PC-3 (cell line): ENCODE measurements at regions of chr3 and their contacts with region 1.

Region 1: GRCh38 chr3:22117751-22118346 is 366.8 kb upstream of the ZNF385D start:
- DNase-seq: peak; percentile 72
- ATAC-seq: no peak
- H3K4me3 ChIP-seq: no peak overlapping the region
- H3K27ac ChIP-seq: no peak overlapping the region
- H3K4me1 ChIP-seq: peaks cover 37% of the 10 kb centered on the region
- H3K27me3 ChIP-seq: no peaks in the 10 kb centered on the region
- CTCF ChIP-seq: peak; percentile 88

Region 2: DNA sequence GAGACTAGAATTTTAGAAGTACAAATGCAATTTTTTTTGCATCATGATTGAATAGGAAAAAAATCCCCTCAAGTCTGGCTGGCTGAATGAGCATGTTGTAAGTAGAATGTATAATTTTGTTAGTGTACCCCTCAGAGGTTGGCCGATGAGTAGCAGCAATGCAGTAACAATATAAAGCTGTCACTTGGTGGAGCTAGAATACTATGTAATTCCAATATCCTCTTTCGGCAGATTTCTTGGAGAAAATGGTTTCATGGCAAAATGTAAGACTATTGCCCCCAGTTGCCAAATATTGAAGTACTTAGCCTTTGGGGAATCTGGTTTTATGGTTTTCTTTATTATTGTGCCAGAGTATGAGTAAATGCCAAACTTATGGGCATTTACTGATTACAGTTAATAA is 1892.1 kb before region 1 on chr3:
- CTCF ChIA-PET with region 1: no interaction called
- POLR2A ChIA-PET with region 1: no interaction called
- intact Hi-C with region 1: loop called (anchors 10 kb)
- DNase-seq: peak; percentile 61
- ATAC-seq: peak; percentile 85
- H3K4me3 ChIP-seq: no peak overlapping the region
- H3K27ac ChIP-seq: no peak overlapping the region
- H3K4me1 ChIP-seq: no peaks in the 10 kb centered on the region
- H3K27me3 ChIP-seq: 0 out of 2 replicates have a peak, but pooled peaks cover 4% of the 10 kb centered on the region
- CTCF ChIP-seq: peak; percentile 70

Region 3: GRCh38 chr3:20511863-20512505 is 1605.9 kb before region 1 on chr3:
- CTCF ChIA-PET with region 1: no interaction called
- POLR2A ChIA-PET with region 1: no interaction called
- intact Hi-C with region 1: loop called (anchors 1 kb)
- DNase-seq: peak; percentile 76
- ATAC-seq: peak; percentile 98
- H3K4me3 ChIP-seq: no peak overlapping the region
- H3K27ac ChIP-seq: no peak overlapping the region
- H3K4me1 ChIP-seq: no peaks in the 10 kb centered on the region
- H3K27me3 ChIP-seq: no peaks in the 10 kb centered on the region
- CTCF ChIP-seq: peak; percentile 87

Region 4: GRCh38 chr3:21745966-21746365 is 371.9 kb before region 1 on chr3:
- CTCF ChIA-PET with region 1: no interaction called
- POLR2A ChIA-PET with region 1: no interaction called
- intact Hi-C with region 1: no loop called
- DNase-seq: no peak
- ATAC-seq: no peak
- H3K4me3 ChIP-seq: no peak overlapping the region
- H3K27ac ChIP-seq: no peak overlapping the region
- H3K4me1 ChIP-seq: peaks cover 28% of the 10 kb centered on the region
- H3K27me3 ChIP-seq: no peaks in the 10 kb centered on the region
- CTCF ChIP-seq: no peak

Region 5: DNA sequence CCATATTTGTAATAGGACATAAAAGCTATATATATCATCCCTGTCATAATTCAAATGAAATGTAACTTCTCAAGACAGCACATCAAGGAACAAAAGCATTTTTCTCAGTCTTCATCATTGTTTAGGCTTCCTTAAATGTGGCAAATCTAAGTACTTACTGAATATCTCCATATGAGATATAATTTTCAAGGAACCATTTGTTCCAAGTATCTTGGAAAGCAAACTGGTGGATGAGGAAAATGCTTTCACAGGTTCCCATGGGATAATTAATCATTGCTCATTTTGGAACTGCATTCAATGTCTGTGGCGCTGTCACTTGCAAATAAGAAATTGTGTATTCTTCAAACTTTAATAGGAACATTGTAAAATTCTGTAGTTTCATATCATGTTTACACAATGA is 314.2 kb before region 1 on chr3:
- CTCF ChIA-PET with region 1: no interaction called
- POLR2A ChIA-PET with region 1: no interaction called
- intact Hi-C with region 1: no loop called
- DNase-seq: no peak
- ATAC-seq: no peak
- H3K4me3 ChIP-seq: no peak overlapping the region
- H3K27ac ChIP-seq: no peak overlapping the region
- H3K4me1 ChIP-seq: no peaks in the 10 kb centered on the region
- H3K27me3 ChIP-seq: no peaks in the 10 kb centered on the region
- CTCF ChIP-seq: no peak

Region 6: GRCh38 chr3:21913791-21914190 is 204.1 kb before region 1 on chr3:
- CTCF ChIA-PET with region 1: no interaction called
- POLR2A ChIA-PET with region 1: no interaction called
- intact Hi-C with region 1: loop called (anchors 5 kb)
- DNase-seq: no peak
- ATAC-seq: no peak
- H3K4me3 ChIP-seq: no peak overlapping the region
- H3K27ac ChIP-seq: no peak overlapping the region
- H3K4me1 ChIP-seq: no peaks in the 10 kb centered on the region
- H3K27me3 ChIP-seq: no peaks in the 10 kb centered on the region
- CTCF ChIP-seq: no peak

Region 7: DNA sequence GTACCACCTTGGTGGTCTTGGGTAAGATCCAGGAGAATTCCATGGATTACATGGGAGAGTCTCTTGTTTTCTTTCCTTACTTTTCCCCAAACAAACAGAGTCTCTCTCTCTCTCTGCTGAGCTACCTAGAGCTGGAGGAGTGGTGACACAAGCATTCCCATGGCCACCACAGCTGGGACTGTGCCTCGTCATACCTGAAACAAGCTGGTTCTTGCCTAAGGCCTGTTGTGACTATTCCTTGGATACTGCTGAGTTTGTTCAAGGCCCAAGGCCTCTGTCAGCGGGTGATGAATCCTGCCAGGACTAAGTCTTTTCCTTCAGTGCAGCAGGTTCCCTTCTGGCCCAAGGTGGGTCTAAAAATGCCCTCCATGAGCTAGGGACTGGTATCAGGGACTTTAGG is 11.2 kb after region 1 on chr3:
- CTCF ChIA-PET with region 1: no interaction called
- POLR2A ChIA-PET with region 1: no interaction called
- intact Hi-C with region 1: no loop called
- DNase-seq: no peak
- ATAC-seq: no peak
- H3K4me3 ChIP-seq: no peak overlapping the region
- H3K27ac ChIP-seq: no peak overlapping the region
- H3K4me1 ChIP-seq: no peaks in the 10 kb centered on the region
- H3K27me3 ChIP-seq: no peaks in the 10 kb centered on the region
- CTCF ChIP-seq: no peak

Region 8: GRCh38 chr3:22159004-22159695 is 41.3 kb after region 1 on chr3:
- CTCF ChIA-PET with region 1: no interaction called
- POLR2A ChIA-PET with region 1: no interaction called
- intact Hi-C with region 1: loop called (anchors 2 kb)
- DNase-seq: peak; percentile 89
- ATAC-seq: peak; percentile 85
- H3K4me3 ChIP-seq: no peak overlapping the region
- H3K27ac ChIP-seq: peak overlapping the region; percentile 27
- H3K4me1 ChIP-seq: peaks cover 46% of the 10 kb centered on the region
- H3K27me3 ChIP-seq: no peaks in the 10 kb centered on the region
- CTCF ChIP-seq: no peak